Activated naive CD8-positive, alpha-beta T cell treated with anti-CD3 and anti-CD28 coated beads, Interleukin-2, amount 10 ng/mL, durations not matched to agents 7 days and 5 days (primary cell): ENCODE measurements at regions of chr18 and their contacts with region 1.

Region 1: DNA sequence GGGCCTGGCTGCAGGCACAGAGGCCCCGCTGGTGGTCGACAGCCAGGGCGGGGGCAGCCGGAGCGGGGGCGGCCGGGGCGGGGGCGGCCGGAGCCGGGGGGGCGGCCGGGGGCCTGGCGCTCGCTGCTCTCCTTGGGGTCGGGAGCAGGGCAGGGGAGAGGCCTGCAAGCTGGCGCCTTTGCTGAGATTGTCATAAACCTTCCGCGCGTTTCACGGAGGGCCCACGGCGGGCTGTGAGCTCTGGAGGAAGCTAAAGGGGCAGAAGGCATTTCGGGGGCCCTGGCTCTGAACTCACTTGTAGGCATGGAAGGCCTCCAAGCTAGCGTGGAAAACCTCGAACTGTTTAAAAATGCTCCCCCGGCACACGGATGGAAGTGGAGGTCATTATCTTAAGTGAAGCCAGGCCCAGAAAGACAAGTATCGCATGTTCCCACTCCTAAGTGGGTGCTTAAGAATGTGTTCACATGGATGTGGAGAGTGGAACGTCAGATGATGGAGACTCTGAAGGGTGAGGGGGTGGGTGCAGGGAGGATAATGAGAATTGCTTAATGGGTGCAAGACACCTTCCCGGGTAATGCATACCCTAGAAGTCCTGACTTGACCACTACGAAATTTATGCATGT is 629 bp downstream of the PRELID3A start:
- DNase-seq: no peak
- ATAC-seq: no peak
- H3K4me3 Mint-ChIP-seq: peak overlapping the region; percentile 81
- H3K27ac Mint-ChIP-seq: peak overlapping the region; percentile 56
- H3K4me1 Mint-ChIP-seq: peaks cover 16% of the 10 kb centered on the region
- H3K27me3 Mint-ChIP-seq: peaks cover 38% of the 10 kb centered on the region

Region 2: DNA sequence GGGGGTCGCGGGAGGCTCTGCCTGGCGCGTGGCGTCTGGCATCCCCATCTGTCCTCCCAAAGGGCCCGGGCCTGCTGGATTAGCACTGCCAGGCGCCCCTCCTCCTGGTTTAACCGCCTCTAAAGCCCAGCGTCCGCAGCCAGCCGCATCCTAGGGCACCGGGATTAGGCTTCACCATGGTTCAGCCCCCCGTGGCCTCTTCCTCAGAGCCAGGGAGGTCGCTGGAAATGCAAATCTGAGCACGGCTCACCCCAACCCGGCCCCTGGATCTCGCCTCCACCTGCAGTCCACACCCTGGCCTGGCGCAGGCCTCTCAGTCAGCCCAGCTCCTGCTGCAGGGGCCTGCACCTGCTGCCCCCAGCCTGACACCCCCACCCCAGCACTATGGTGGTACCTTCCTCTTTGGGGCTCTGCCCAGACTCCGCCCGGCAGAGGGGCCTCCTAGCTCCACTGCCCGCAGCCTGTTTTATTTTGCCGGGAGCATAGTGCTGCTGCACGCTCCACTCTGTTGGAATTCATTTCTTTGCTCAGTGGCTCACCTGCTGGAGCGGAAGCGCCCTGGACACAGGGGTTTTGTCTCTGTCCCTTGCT is 12.6 kb after region 1 on chr18:
- POLR2A ChIA-PET with region 1: interaction called, 13 read pairs
- DNase-seq: no peak
- ATAC-seq: no peak
- H3K4me3 Mint-ChIP-seq: peak overlapping the region; percentile 73
- H3K27ac Mint-ChIP-seq: peak overlapping the region; percentile 51
- H3K4me1 Mint-ChIP-seq: peaks cover 6% of the 10 kb centered on the region
- H3K27me3 Mint-ChIP-seq: no peaks in the 10 kb centered on the region